ENCODE measurements at regions of chr20 and their contacts with region 1.

Region 1: DNA sequence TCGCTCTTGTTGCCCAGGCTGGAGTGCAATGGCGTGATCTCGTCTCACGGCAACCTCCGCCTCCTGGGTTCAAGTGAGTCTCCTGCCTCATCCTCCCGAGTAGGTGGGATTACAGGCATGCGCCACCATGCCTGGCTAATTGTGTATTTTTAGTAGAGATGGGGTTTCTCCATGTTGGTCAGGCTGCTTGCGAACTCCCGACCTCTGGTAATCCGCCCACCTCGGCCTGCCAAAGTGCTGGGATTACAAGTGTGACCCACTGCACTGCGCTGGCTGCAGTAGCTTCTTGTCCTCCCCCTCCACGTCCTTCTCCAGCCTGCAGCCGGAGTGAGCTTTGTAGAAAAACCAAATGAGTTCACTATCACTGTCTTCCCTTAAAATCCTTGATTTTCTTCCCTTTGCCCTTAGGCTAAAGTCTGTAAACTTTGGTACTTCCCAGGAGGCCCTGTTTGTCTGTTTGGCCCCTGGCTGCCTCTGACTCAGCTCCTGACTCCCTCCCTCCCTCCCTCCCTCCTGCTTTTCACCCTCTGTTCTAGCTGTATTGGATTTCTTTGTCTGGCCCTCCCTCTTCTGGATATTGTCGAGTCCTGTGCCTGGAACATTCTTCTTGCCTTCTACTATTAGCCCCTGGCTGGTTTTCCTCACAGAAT is 12.9 kb downstream of the PARD6B start:
- DNase-seq: no peak

Region 2: GRCh38 chr20:50628332-50628731 is 115.9 kb before region 1 on chr20:
- intact Hi-C with region 1: loop called (anchors 2 kb)
- DNase-seq: no peak

Region 3: DNA sequence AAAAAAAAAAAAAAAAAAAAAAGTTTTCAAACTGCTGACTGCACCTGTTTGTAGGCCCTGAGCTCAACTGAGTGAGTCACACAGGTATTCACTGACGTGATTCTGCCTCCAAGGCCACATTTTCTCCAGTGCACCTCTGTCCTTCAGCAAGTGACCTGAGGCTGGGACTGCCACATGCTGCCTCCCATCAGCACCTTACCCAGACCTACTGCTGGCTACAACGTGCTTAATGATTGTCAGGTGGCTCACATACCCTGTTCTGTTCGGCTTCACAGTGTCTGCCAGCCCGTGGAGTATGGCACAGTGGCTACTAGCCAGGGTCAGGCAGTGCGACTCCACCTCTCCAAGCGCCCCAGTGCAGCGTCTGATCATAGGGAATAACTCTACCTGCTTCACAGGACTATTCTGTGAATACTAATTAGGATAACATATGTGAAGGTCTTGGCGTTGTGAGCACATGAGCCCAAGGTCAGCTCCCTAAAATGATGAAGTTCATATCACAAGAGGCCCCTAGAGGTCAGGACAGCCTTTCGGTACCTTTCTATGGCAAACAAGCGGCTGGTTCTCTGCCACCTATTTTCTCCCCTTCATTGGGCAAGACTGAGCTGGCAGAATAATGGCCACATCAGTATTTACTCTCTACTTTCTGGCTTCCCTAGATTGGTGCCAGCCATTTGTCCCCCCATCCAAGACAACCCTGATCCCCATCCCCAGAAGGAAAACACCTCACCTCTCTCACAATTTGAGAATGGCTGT is 81.0 kb before region 1 on chr20:
- intact Hi-C with region 1: loop called (anchors 2 kb)
- DNase-seq: no peak

Region 4: GRCh38 chr20:50919567-50919966 is 175.3 kb after region 1 on chr20:
- intact Hi-C with region 1: no loop called
- DNase-seq: no peak

Region 5: GRCh38 chr20:51014797-51015722 is 270.8 kb after region 1 on chr20:
- intact Hi-C with region 1: no loop called
- DNase-seq: no peak

Measured in cardiac septum (tissue), 1 donor.